GM12878 (cell line): ENCODE measurements at regions of chr4 and their contacts with region 1.

Region 1: DNA sequence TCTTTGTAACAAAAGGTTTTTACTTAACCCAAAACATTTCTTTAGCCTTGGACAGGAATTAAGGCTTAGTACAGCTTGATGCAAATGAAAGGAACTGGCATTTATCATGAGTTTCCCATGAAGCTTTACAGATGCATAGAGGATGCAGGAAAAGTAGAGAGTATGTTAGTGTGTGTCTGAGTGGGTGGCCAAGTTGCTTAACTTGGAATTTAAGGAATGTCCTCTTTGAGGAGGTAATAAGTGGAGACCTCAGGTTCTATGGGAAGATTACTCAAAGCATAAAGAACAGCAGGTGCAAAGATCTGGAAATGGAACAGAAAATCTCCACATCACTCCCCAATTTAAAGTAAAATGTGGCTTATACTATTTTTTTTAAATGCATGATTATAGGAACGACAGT is 457.9 kb downstream of the KCNIP4 start:
- DNase-seq: no peak
- ATAC-seq: no peak
- H3K4me3 ChIP-seq: no peak overlapping the region
- H3K27ac ChIP-seq: no peak overlapping the region
- H3K4me1 ChIP-seq: no peaks in the 10 kb centered on the region
- H3K27me3 ChIP-seq: no peaks in the 10 kb centered on the region
- CTCF ChIP-seq: no peak
- EP300 ChIP-seq: no peak
- POLR2A ChIP-seq: no peak
- RAD21 ChIP-seq: no peak

Region 2: GRCh38 chr4:21469438-21470300 is 21.0 kb before region 1 on chr4:
- CTCF ChIA-PET with region 1: interaction called, 10 read pairs
- POLR2A ChIA-PET with region 1: no interaction called
- RAD21 ChIA-PET with region 1: no interaction called
- SMC1A ChIA-PET with region 1: no interaction called
- in situ Hi-C with region 1: no loop called
- intact Hi-C with region 1: no loop called
- DNase-seq: no peak
- ATAC-seq: no peak
- H3K4me3 ChIP-seq: no peak overlapping the region
- H3K27ac ChIP-seq: no peak overlapping the region
- H3K4me1 ChIP-seq: no peaks in the 10 kb centered on the region
- H3K27me3 ChIP-seq: no peaks in the 10 kb centered on the region
- CTCF ChIP-seq: peak; percentile 36 to 41 (median 37); a peak in 4 of 6 replicates
- EP300 ChIP-seq: no peak
- POLR2A ChIP-seq: no peak
- RAD21 ChIP-seq: peak; percentile 44